Activated CD4-positive, alpha-beta memory T cell treated with anti-CD3 and anti-CD28 coated beads for 36 hours (primary cell): ENCODE measurements at regions of chrX and their contacts with region 1.

Region 1: DNA sequence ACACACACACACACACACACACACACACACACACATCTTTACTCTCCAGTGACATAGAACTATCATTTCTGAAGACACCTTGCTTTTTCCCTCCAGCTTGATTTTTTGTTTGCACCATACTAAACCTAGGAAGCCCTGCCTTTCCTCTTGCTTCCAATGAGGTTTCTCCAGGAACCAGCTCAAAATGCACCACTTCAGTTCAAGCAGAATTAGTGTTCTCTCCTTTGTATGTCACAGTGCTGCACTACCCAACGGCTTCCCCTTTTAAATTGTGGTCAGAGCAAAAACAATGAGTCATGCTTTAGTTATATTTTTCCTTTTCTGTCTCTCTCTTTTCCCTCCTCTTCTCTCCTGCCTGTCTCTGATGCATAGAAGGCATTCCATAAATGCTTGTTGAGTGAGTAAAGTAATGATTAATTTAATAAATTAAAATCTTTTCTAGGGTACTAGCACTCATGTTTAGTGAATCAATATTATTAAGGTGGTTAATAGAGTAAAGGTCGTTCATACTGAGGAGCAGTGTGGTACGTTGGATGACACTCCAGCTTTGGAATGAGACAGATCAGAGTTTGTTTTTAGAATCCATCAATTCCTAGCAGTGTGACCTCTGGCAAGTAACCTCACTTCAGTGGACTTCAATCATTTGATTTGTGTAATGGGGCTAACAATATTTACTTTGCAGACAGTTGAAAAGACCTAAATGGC is 5.9 kb downstream of the RTL3 start:
- DNase-seq: no peak
- H3K4me3 Mint-ChIP-seq: no peak overlapping the region
- H3K27ac Mint-ChIP-seq: no peak overlapping the region
- H3K4me1 Mint-ChIP-seq: peaks cover 17% of the 10 kb centered on the region
- H3K27me3 Mint-ChIP-seq: no peaks in the 10 kb centered on the region

Region 2: DNA sequence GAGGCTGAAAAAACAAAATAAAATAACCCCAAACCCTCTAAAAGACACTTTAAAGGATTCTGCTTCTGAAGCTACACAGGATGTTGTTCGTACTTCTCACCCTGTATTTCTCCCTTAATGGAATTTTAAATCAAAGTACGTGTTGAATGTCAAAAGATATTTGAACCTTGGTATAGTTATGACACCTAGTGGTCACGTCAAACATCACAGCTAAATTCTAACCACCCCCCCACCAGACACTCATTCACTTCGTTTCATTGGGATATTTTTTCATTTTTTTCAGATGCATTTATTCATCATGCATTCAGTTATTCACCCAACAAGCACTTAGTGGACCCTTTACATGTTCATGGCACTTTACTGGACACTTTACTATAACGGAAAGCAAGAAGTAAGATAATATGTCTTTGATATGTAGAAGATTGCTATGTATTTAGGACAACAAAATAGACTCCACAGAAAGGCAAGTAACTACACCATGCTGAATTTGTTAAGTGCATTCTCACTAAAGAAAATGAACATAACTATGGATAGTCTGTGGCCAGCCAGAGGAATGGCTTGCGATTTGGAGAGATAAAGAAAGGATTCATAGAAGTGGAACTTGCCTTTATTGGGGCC is 428.7 kb after region 1 on chrX:
- CTCF ChIA-PET with region 1: interaction called, 5 read pairs
- POLR2A ChIA-PET with region 1: no interaction called
- intact Hi-C with region 1: loop called (anchors 10 kb)
- DNase-seq: peak; percentile 30
- H3K4me3 Mint-ChIP-seq: peak overlapping the region; percentile 69
- H3K27ac Mint-ChIP-seq: peak overlapping the region; percentile 79
- H3K4me1 Mint-ChIP-seq: peaks cover 41% of the 10 kb centered on the region
- H3K27me3 Mint-ChIP-seq: no peaks in the 10 kb centered on the region